Endothelial cell of umbilical vein (primary cell): ENCODE measurements at regions of chr21 and their contacts with region 1.

Region 1: GRCh38 chr21:27448960-27449359 is 482.1 kb upstream of the ADAMTS5 start:
- DNase-seq: peak; percentile 95
- H3K4me3 ChIP-seq: no peak overlapping the region
- H3K27ac ChIP-seq: no peak overlapping the region
- H3K4me1 ChIP-seq: no peaks in the 10 kb centered on the region
- H3K27me3 ChIP-seq: no peaks in the 10 kb centered on the region
- CTCF ChIP-seq: no peak
- POLR2A ChIP-seq: no peak

Region 2: DNA sequence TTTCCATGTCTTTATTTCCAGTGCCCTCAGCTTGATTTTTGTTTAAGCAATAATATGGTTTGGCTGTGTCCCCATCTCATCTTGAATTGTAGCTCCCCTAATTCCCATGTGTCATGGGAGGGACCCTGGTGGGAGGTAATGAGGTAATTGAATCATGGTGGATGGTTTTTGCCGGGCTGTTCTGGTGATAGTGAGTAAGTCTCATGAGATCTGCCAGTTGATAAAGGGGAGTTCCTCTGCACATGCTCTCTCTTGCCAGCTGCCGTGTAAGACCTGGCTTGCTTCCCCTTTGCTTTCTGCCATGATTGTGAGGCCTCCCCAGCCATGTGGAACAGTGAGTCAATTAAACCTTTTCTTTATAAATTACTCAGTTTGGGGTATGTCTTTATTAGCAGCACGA is 77.5 kb after region 1 on chr21:
- CTCF ChIA-PET with region 1: no interaction called
- POLR2A ChIA-PET with region 1: no interaction called
- dilution Hi-C with region 1: no loop called
- intact Hi-C with region 1: loop called (anchors 5 kb)
- DNase-seq: no peak
- H3K4me3 ChIP-seq: no peak overlapping the region
- H3K27ac ChIP-seq: no peak overlapping the region
- H3K4me1 ChIP-seq: no peaks in the 10 kb centered on the region
- H3K27me3 ChIP-seq: no peaks in the 10 kb centered on the region
- CTCF ChIP-seq: no peak
- POLR2A ChIP-seq: no peak